Posterior vena cava (tissue), 2 donors: ENCODE measurements at regions of chr17 and their contacts with region 1.

Region 1: GRCh38 chr17:28174352-28174964 is 132.0 kb downstream of the NLK start:
- DNase-seq: no peak

Region 2: DNA sequence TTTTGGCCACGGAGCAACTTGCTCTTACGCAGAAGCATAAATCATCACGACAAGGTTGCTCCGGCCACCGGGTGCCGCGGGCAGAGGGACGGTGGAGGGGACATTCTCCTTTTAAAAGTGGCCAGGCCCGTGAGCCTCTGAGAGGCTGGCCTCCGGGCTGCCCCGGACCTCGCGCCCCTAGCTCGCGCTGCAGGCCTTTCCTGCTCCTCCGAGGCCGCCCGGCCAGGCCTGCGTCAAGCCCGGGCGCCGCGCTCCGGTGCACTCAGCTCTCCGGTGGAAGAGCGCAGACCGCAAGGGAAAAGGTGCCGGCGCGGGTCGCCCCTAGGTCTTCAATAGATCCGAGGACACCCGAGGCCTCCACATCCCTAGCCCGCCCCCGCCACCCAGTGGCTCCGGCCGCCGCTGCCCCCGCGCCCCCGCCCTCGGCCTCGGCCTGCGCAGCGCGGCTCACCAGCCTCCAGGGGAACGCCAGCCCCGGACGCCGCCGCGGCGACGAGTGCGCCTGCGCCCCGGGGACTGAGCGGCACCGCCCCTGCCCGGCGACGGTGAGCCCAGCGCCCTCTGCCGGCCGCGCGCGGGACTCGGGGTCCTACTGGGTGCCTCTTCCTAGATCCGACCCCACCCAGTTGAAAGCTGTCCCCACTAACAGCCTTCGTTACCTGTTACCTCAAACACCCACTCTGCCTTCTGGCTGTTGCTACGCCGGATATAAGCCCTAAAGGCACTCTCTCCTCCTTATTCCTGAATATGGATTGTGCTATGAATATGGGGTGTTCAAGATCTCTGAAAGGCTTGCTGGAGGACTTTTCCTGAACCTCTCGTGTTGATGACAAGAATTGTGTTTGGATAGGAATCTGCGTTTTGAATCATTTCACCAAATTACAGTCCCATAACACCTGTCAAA is 281.3 kb before region 1 on chr17 and contains the start of gene LYRM9:
- intact Hi-C with region 1: loop called in 1 of 2 experiments (anchors 10 kb)
- DNase-seq: peak; percentile 98
- total RNA-seq, gene LYRM9: 6.0 to 7.8 TPM

Region 3: GRCh38 chr17:28145348-28145747 is 29.1 kb before region 1 on chr17:
- intact Hi-C with region 1: no loop called
- DNase-seq: no peak